Right ventricle myocardium superior (tissue), 1 donor: ENCODE measurements at regions of chr1 and their contacts with region 1.

Region 1: GRCh38 chr1:170010443-170010842 is 64.1 kb downstream of the KIFAP3 start:
- DNase-seq: no peak
- ATAC-seq: no peak

Region 2: DNA sequence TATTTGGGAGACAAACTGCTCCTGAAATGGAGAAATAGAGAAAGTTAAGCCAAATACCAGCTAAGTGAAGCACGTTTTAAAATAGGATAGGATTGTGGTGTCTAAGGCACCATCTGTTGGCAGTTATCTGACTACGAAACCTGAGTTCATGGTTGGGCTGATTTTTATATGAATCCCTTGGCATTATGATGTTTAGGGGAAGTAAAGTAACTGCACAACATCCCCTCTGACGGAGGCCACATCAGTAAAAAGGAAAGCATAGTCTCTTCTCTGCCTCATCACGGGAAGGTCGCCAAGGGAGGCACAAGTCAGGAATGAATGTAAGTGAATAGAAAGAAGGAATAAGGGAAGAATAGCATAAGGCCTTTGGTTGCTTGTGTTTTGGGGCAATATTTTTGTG is 781.5 kb after region 1 on chr1:
- intact Hi-C with region 1: no loop called
- DNase-seq: no peak
- ATAC-seq: no peak

Region 3: GRCh38 chr1:170881268-170882265 is 871.1 kb after region 1 on chr1:
- intact Hi-C with region 1: loop called (anchors 10 kb)
- DNase-seq: no peak
- ATAC-seq: peak; percentile 81